Right cardiac atrium (tissue), 5 donors: ENCODE measurements at regions of chr10 and their contacts with region 1.

Region 1: GRCh38 chr10:71212318-71213126 is at the start of gene UNC5B:
- DNase-seq: peak; percentile 93 to 98 (median 97)
- ATAC-seq: peak; percentile 89 to 92
- H3K4me3 ChIP-seq: peak within 1 kb of the TSS; percentile 51
- H3K27ac ChIP-seq: peak within 1 kb of the TSS; percentile 80
- H3K4me1 ChIP-seq: peaks cover 16% of the 10 kb centered on the region
- H3K27me3 ChIP-seq: no peaks in the 10 kb centered on the region
- total RNA-seq, gene UNC5B: 17.0 to 26.6 (median 24.0) TPM

Region 2: DNA sequence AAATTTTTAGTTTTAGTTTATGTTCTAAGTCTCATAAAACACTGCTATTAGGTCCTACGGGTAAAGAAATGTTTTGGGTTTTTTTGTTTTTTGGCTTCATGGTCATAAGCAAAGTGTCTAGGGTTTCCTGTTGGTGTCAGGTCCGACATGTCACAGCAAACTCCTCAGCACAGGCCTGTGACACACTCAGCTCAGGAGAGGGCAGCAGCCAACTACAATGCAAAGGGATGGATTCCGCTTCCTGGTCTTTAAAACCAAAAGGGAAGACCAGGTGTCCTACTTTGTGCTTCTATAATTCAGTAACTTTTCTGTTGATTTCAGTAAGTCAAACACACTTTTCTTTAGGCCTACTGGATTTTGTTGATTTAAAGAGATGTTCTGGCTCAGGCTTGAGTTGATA is 1243.7 kb before region 1 on chr10:
- intact Hi-C with region 1: no loop called
- DNase-seq: no peak
- ATAC-seq: peak in 1 of 2 donors; percentile 58
- H3K4me3 ChIP-seq: no peak overlapping the region
- H3K27ac ChIP-seq: no peak overlapping the region
- H3K4me1 ChIP-seq: no peaks in the 10 kb centered on the region
- H3K27me3 ChIP-seq: no peaks in the 10 kb centered on the region

Region 3: GRCh38 chr10:70906953-70907636 is 305.4 kb before region 1 on chr10:
- intact Hi-C with region 1: loop called in 2 of 4 experiments (anchors 5 kb)
- DNase-seq: peak in 1 of 3 donors; percentile 36
- ATAC-seq: peak in 1 of 2 donors; percentile 3
- H3K4me3 ChIP-seq: no peak overlapping the region
- H3K27ac ChIP-seq: peak overlapping the region; percentile 21
- H3K4me1 ChIP-seq: no peaks in the 10 kb centered on the region
- H3K27me3 ChIP-seq: no peaks in the 10 kb centered on the region

Region 4: GRCh38 chr10:70925377-70926225 is 286.9 kb before region 1 on chr10:
- intact Hi-C with region 1: loop called (anchors 5 to 10 kb)
- DNase-seq: peak; percentile 46 to 88 (median 82)
- ATAC-seq: peak; percentile 77 to 79
- H3K4me3 ChIP-seq: no peak overlapping the region
- H3K27ac ChIP-seq: no peak overlapping the region
- H3K4me1 ChIP-seq: peaks cover 4% of the 10 kb centered on the region
- H3K27me3 ChIP-seq: no peaks in the 10 kb centered on the region

Region 5: DNA sequence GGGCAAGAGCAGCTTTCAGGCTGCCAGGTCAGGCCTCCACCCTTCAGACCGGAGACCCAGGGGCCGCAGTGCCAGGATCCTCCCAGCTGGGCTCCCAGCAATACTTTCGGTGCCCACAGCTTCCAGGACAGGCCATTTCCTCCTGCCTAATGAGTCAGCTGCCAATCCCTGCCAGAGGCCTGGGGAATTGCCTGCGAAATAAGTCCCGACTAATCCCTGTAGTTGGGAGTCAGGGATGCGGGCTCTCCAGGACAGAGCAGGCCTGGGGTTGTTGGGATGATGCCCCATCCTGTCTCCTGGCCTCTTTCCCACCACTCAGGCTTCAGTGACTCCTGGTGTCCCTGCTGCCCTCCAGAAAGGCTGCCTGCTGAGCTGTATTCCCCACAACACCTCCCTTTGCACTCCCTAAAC is 143.7 kb before region 1 on chr10:
- intact Hi-C with region 1: loop called in 1 of 4 experiments (anchors 10 kb)
- DNase-seq: peak; percentile 59 to 83 (median 76)
- ATAC-seq: peak; percentile 55 to 64
- H3K4me3 ChIP-seq: no peak overlapping the region
- H3K27ac ChIP-seq: peak overlapping the region; percentile 69
- H3K4me1 ChIP-seq: peaks cover 5% of the 10 kb centered on the region
- H3K27me3 ChIP-seq: no peaks in the 10 kb centered on the region

Region 6: DNA sequence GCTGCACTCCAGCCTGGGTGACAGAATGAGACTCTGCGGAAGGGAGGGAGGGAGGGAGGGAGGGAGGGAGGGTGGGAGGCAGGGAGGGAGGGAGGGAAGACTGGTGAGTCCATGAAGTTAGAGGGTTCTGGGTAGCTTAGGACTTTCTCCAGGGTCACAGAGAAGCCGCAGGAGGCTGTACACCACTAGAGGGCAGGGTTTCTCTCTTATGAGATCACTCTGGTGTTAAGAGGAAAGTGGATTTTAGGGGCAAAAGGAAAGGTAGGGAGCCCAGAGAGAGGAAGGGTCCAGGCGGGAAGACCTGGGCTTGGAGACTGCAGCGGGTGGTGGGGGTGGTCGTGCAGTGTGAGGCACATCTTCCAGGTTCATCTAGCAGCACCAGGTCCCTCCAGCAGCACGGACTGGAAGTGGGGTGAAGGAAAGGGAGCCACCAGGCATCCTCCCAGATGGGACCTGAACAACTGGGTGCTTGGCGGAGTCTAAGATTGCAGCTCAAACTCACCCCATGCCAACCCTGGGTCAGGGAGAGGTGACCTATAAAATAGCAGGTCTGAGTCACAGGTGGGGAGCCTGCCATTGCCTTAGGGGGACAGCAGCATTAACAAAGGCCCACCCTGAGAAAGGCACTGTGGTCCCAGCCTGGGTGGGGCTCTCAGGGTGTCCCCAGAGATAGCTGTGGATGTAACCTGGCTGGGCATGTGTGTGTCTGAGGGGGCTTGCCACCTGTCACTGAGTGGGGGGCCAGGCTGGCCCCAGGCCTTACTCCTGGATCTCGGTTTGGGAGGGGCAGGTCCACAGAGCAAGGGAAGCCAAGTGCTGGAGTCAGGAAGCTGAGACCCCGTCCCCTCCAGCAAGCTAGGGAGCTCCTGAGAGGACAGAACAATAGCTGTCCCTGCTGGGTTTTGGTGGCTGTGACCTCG is 58.0 kb after region 1 on chr10:
- intact Hi-C with region 1: loop called (anchors 2 to 5 kb)
- DNase-seq: peak in 2 of 3 donors; percentile 69 to 82
- ATAC-seq: peak; percentile 23 to 39
- H3K4me3 ChIP-seq: no peak overlapping the region
- H3K27ac ChIP-seq: peak overlapping the region; percentile 61
- H3K4me1 ChIP-seq: peaks cover 12% of the 10 kb centered on the region
- H3K27me3 ChIP-seq: no peaks in the 10 kb centered on the region

Region 7: GRCh38 chr10:71396084-71396720 is 183.7 kb after region 1 on chr10:
- intact Hi-C with region 1: no loop called
- DNase-seq: peak; percentile 60 to 88 (median 82)
- ATAC-seq: peak; percentile 88 to 93
- H3K4me3 ChIP-seq: peak overlapping the region; percentile 63
- H3K27ac ChIP-seq: no peak overlapping the region
- H3K4me1 ChIP-seq: peaks cover 5% of the 10 kb centered on the region
- H3K27me3 ChIP-seq: no peaks in the 10 kb centered on the region